Cardiac septum (tissue), 1 donor: ENCODE measurements at regions of chr20 and their contacts with region 1.

Region 1: DNA sequence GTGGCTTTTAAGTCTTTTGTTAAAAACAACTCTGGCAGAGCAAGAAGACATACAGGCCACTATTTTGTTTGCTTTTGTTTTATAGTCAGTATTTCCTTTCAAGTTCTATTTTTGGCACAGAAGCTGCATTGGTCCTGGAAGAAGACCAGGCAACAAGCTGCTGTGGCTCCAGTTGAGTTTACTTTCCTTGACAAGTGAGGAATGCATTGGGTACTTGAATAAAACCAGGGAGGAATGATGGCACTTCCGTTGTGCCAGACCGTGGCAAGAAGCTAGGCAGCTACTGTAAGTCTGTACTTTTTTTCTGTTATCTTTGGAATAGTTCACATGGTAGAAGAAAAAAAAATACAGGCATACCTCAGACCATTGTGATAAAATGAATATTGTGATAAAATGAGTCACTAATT is 66.3 kb downstream of the NCOA3 start:
- DNase-seq: no peak

Region 2: DNA sequence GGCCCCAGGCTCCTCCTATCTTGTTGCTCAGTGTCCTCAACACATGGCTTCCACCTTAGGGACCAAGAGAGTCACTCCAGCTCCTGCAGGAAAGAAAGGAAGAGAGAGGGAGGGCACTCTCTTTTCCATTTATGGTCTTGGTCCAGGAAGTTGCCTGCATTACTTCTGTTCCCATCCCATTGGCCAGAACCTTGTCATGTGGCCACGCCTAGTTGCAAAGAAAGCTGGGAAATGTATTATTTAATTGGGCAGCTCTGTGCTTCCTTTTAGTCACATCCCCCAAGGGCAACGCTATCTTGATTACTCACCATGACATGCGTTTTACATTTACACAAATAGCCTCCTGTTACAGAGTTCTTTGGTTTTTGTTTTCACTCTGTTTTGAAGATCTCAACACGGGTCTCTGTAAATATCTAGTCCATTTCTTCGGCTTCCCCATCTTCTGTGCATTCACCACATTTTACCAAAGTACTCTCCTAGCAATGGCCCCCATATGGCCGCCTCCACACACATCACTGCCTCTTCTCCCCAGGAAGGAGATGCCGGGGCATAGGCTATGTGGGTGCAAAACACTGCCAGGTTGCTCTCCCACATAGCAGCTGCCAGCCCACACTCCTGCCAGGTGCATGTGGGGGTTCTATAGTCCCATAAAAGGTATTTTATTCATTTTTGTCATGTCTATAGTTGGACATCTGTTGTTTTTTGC is 175.8 kb before region 1 on chr20:
- intact Hi-C with region 1: no loop called
- DNase-seq: peak; percentile 77

Region 3: DNA sequence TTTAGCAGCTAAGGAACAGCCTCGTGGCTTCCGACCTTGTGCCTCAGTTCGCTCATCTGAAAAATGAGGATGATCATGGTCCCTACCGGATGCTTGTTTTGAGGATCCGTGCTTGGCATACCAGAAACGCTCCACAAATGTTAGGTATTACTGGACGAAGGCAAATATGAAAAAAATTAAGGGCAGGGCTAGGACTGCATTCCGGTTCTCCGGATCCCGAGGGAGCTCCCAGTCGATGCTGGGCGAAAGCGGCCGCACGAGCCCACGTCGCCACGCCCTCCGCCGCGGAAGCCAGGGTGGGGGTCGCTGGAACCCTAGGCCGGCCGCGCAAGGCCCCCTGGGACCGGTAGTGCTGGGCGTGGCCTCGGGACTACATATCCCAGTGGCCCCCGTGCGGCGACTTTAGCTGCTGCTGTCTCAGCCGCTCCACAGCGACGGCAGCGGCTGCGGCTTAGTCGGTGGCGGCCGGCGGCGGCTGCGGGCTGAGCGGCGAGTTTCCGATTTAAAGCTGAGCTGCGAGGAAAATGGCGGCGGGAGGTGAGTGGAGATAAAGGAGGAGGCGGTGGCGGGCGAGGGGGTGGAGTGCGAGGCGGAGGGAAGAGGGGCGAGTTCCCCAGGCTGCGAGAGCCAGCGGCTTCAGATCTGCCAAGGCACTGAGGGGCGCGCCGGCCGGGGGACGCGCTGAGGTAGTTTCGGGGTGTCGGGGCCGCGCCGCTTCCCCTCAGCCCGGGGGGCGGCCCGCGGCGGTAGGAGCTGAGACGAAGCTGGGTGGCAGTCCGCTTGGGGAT is 66.3 kb before region 1 on chr20 and contains the start of gene NCOA3:
- intact Hi-C with region 1: loop called (anchors 5 kb)
- DNase-seq: peak; percentile 97
- total RNA-seq, gene NCOA3: 18.6 TPM

Region 4: GRCh38 chr20:47600967-47601547 is 33.1 kb after region 1 on chr20:
- intact Hi-C with region 1: loop called (anchors 5 kb)
- DNase-seq: no peak

Region 5: GRCh38 chr20:47631078-47631477 is 63.1 kb after region 1 on chr20:
- intact Hi-C with region 1: no loop called
- DNase-seq: no peak

Region 6: GRCh38 chr20:47642624-47643023 is 74.6 kb after region 1 on chr20:
- intact Hi-C with region 1: no loop called
- DNase-seq: no peak